Left cardiac atrium (tissue), 4 donors: ENCODE measurements at regions of chr9 and their contacts with region 1.

Region 1: DNA sequence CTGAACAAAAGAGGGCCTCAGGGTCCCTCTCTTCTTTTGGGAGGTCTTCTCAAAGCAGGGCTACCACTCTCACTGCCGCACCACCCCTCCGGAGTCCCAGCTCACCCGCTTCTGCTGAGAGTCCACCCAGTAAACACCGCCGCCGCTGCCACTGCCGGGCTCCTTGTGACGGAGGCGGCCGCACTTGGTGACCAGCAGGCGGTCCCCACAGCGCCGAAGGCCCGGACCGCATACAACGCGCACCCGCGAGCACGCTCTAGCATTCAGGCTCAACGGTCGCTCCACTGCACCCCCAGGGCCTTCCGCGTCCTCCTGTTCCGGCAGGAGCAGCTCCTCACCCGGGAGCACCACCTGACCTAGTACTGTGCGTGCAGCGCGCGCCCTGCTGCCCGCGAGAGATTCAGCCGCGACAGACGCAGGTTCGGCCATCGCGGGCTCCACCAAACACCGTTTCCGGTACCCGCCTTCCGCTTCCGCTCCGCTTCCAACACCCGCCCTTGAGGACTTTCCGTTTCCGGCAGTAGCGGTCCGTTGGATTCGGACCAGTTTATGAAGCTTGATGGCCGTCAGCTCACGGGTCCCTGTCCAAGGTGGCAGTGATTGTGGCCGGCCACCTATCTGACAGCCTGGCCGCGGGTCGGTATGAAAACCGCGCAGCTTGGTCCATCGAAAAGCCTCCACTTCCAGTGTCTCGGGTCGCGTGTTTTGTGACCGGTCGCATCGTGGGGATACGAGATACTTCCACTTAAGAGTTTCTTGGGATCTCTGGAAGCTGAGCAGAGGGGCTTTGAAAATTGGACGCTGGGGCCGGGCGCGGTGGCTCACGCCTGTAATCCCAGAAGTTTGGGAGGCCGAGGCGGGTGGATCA is at the start of gene EXOSC3:
- DNase-seq: peak; percentile 93
- ATAC-seq: peak; percentile 98
- total RNA-seq, gene EXOSC3: 18.8 to 19.8 TPM

Region 2: GRCh38 chr9:36572515-36573418 is 1212.1 kb before region 1 on chr9 and contains the start of gene MELK:
- intact Hi-C with region 1: no loop called
- DNase-seq: peak; percentile 83
- ATAC-seq: peak; percentile 99
- total RNA-seq, gene MELK: 0.10 to 1.1 TPM

Region 3: GRCh38 chr9:36980148-36980974 is 804.5 kb before region 1 on chr9:
- intact Hi-C with region 1: no loop called
- DNase-seq: no peak
- ATAC-seq: no peak

Region 4: GRCh38 chr9:37676411-37676830 is 108.4 kb before region 1 on chr9:
- intact Hi-C with region 1: no loop called
- DNase-seq: no peak
- ATAC-seq: peak; percentile 57 to 74

Region 5: GRCh38 chr9:37753489-37754190 is 31.2 kb before region 1 on chr9 and contains the start of gene TRMT10B:
- intact Hi-C with region 1: loop called in 1 of 2 experiments (anchors 2 kb)
- DNase-seq: peak; percentile 77
- ATAC-seq: peak; percentile 95 to 97
- total RNA-seq, gene TRMT10B: 4.2 to 5.7 TPM

Region 6: DNA sequence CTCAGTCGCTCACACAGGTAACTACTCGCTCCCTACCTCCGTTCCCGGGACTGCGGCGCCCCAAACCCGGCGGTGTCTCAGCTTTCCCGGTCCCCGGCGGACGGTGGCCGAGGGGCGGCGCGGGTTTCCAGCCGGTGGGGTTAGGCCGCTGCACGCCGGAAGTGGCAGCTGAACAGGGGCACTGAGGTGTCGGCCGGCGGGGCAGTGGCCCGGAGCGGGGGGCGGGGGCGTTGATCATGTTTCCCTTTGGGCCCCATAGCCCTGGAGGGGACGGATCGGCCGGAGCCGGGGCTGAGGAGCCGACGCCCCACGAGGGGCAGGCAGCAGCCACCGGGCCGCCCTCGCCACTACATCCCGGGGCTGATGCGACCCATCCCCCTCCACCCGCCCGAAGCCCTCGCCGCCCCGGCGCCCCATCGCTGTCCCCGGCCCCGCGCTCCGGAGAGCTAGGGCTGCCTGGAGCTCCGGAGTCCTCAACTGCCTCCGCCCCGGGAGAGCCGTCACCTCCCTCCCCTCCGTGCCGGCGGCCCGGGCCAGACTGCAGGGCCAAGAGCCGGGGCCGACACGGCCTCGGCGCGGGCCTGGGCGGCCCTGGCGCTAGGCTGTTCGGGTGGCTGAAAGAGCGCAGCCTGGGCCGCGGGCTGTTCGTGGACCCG is 15.9 kb after region 1 on chr9 and contains the start of gene DCAF10:
- intact Hi-C with region 1: loop called in 1 of 2 experiments (anchors 1 kb)
- DNase-seq: peak; percentile 88
- ATAC-seq: peak; percentile 95 to 97
- total RNA-seq, gene DCAF10: 19.6 to 20.0 TPM

Region 7: GRCh38 chr9:37984672-37985611 is 200.1 kb after region 1 on chr9:
- intact Hi-C with region 1: no loop called
- DNase-seq: peak; percentile 75
- ATAC-seq: peak; percentile 75 to 89